Activated CD4-positive, alpha-beta memory T cell treated with anti-CD3 and anti-CD28 coated beads, Interleukin-2, amount 10 ng/mL, durations not matched to agents 7 days and 5 days (primary cell): ENCODE measurements at regions of chr3 and their contacts with region 1.

Region 1: GRCh38 chr3:129120254-129121004 is 1.2 kb downstream of the RAB43 start:
- DNase-seq: peak; percentile 96
- H3K4me3 Mint-ChIP-seq: peak overlapping the region; percentile 91
- H3K27ac Mint-ChIP-seq: peak overlapping the region; percentile 96
- H3K4me1 Mint-ChIP-seq: peaks cover 53% of the 10 kb centered on the region
- H3K27me3 Mint-ChIP-seq: no peaks in the 10 kb centered on the region

Region 2: DNA sequence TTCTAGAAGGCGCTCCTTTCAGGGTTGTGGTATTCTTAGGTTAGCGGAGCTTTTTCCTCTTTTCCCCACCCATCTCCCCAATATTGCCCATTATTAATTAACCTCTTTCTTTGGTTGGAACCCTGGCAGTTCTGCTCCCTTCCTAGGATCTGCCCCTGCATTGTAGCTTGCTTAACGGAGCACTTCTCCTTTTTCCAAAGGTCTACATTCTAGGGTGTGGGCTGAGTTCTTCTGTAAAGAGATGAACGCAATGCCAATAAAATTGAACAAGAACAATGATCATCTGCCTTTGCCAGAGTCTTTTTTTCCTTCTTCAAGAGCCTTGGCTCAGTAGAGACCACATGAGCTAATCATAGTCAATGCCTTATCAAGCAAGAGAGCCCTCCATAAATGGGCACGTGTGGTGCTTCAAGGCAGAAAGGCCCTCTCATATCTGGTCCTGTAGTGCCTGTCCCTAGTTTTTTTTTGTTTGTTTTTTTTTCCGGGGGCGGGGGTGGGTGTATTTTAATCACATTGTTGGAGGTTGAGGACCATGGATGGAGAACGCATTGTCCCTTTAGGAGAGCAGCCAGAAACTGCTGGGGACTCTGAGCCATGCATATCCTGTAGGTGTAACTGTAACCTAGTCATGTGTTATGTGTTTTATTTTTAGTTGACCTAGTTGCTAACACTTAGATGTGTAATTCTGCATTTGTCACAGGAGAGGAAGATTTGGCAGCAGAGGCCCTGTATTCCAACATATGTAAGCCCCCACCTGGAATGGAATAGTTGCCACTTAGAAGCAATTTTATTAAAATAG is 305.7 kb before region 1 on chr3:
- CTCF ChIA-PET with region 1: no interaction called
- POLR2A ChIA-PET with region 1: no interaction called
- DNase-seq: no peak
- H3K4me3 Mint-ChIP-seq: no peak overlapping the region
- H3K27ac Mint-ChIP-seq: no peak overlapping the region
- H3K4me1 Mint-ChIP-seq: peaks cover 3% of the 10 kb centered on the region
- H3K27me3 Mint-ChIP-seq: no peaks in the 10 kb centered on the region

Region 3: DNA sequence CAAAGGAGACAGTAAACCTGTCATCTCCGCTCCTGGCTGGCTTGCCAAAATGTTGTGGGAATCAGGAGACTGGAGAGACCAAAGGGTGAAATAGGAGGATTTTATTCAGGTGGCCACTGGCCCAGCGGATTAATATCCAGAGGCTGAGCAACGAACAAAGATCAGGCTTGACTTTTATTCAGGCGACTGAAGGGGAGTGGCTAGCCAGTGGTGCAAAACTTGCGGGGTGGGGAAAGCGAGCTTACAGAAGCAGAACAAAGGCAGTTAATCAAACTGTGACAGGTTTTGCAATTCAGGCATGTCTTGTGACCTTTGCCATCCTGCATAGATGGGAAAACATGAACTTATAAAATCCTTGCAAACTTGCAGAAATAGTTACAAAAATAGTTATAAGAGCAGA is 260.8 kb before region 1 on chr3:
- CTCF ChIA-PET with region 1: no interaction called
- POLR2A ChIA-PET with region 1: no interaction called
- DNase-seq: no peak
- H3K4me3 Mint-ChIP-seq: no peak overlapping the region
- H3K27ac Mint-ChIP-seq: no peak overlapping the region
- H3K4me1 Mint-ChIP-seq: no peaks in the 10 kb centered on the region
- H3K27me3 Mint-ChIP-seq: no peaks in the 10 kb centered on the region

Region 4: DNA sequence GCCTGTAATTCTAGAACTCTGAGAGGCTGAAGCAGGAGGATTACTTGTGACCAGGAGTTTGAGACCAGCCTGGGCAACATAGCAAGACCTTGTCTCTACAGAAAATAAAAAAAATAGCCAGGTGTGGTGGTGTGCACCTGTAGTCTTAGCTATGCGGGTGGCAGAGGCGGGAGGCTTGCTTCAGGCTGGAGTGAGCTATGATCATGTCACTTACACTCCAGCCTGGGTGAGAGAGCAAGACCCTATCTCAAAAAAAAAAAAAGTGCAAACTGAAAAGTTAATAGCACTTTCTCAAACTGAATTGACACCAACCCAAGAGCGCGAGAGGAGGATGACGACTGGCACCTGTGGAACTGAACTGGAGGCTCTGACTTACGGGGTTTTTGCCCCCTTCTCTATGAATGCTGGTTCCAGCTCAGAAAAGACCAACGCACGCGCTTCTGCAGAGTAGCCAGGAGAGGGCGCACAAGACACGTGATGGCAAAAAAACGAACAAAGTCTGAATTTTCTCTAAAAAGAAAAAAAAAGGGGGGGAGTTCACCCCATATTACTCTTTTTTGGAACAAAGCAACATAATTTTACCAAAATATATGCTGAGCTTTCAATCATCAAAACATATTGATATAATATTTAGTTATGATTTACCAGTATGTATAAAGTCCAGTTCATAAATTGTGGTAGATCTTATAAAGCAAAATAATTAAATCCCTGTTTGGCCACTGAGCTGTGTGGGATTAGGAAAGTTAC is 150.3 kb before region 1 on chr3:
- CTCF ChIA-PET with region 1: interaction called, 23 read pairs
- POLR2A ChIA-PET with region 1: interaction called, 15 read pairs
- DNase-seq: peak; percentile 69
- H3K4me3 Mint-ChIP-seq: no peak overlapping the region
- H3K27ac Mint-ChIP-seq: no peak overlapping the region
- H3K4me1 Mint-ChIP-seq: peaks cover 10% of the 10 kb centered on the region
- H3K27me3 Mint-ChIP-seq: peaks cover 9% of the 10 kb centered on the region

Region 5: GRCh38 chr3:129026728-129027543 is 93.5 kb before region 1 on chr3:
- CTCF ChIA-PET with region 1: interaction called, 4 read pairs
- POLR2A ChIA-PET with region 1: interaction called, 41 read pairs
- DNase-seq: peak; percentile 95
- H3K4me3 Mint-ChIP-seq: peak overlapping the region; percentile 69
- H3K27ac Mint-ChIP-seq: peak overlapping the region; percentile 70
- H3K4me1 Mint-ChIP-seq: peaks cover 14% of the 10 kb centered on the region
- H3K27me3 Mint-ChIP-seq: peaks cover 6% of the 10 kb centered on the region

Region 6: GRCh38 chr3:129068291-129068886 is 52.0 kb before region 1 on chr3:
- CTCF ChIA-PET with region 1: interaction called, 5 read pairs
- POLR2A ChIA-PET with region 1: interaction called, 27 read pairs
- DNase-seq: no peak
- H3K4me3 Mint-ChIP-seq: no peak overlapping the region
- H3K27ac Mint-ChIP-seq: no peak overlapping the region
- H3K4me1 Mint-ChIP-seq: peaks cover 8% of the 10 kb centered on the region
- H3K27me3 Mint-ChIP-seq: peaks cover 18% of the 10 kb centered on the region

Region 7: GRCh38 chr3:129183569-129184395 is 63.4 kb after region 1 on chr3 and contains the start of gene CNBP:
- CTCF ChIA-PET with region 1: interaction called, 3 read pairs
- POLR2A ChIA-PET with region 1: interaction called, 100 read pairs
- DNase-seq: peak; percentile 93
- H3K4me3 Mint-ChIP-seq: peak within 1 kb of the TSS; percentile 94
- H3K27ac Mint-ChIP-seq: peak within 1 kb of the TSS; percentile 93
- H3K4me1 Mint-ChIP-seq: peaks cover 48% of the 10 kb centered on the region
- H3K27me3 Mint-ChIP-seq: no peaks in the 10 kb centered on the region
- total RNA-seq, gene CNBP: 321 to 322 TPM

Region 8: GRCh38 chr3:129238945-129239706 is 118.7 kb after region 1 on chr3:
- CTCF ChIA-PET with region 1: interaction called, 11 read pairs
- POLR2A ChIA-PET with region 1: interaction called, 59 read pairs
- DNase-seq: peak; percentile 64
- H3K4me3 Mint-ChIP-seq: peak overlapping the region; percentile 59
- H3K27ac Mint-ChIP-seq: peak overlapping the region; percentile 97
- H3K4me1 Mint-ChIP-seq: peaks cover 59% of the 10 kb centered on the region
- H3K27me3 Mint-ChIP-seq: no peaks in the 10 kb centered on the region